Transverse colon (tissue), 4 donors: ENCODE measurements at regions of chr21 and their contacts with region 1.

Region 1: GRCh38 chr21:39715804-39716397 is 29.1 kb upstream of the IGSF5 start:
- DNase-seq: peak; percentile 68
- H3K4me3 ChIP-seq: no peak overlapping the region
- H3K27ac ChIP-seq: no peak overlapping the region
- H3K4me1 ChIP-seq: peaks cover 0 to 9% (median 0%) of the 10 kb centered on the region in 4 donors
- H3K27me3 ChIP-seq: no peaks in the 10 kb centered on the region
- CTCF ChIP-seq: peak; percentile 70 to 77 (median 72)
- EP300 ChIP-seq: no peak
- POLR2A ChIP-seq: no peak

Region 2: GRCh38 chr21:39518138-39518846 is 197.6 kb before region 1 on chr21:
- in situ Hi-C with region 1: loop called (anchors 5 to 10 kb)
- intact Hi-C with region 1: loop called (anchors 1 kb)
- DNase-seq: peak; percentile 31
- H3K4me3 ChIP-seq: no peak overlapping the region
- H3K27ac ChIP-seq: no peak overlapping the region
- H3K4me1 ChIP-seq: peaks cover 0 to 8% (median 2%) of the 10 kb centered on the region in 4 donors
- H3K27me3 ChIP-seq: no peaks in the 10 kb centered on the region
- CTCF ChIP-seq: peak; percentile 83 to 94 (median 89)
- EP300 ChIP-seq: no peak
- POLR2A ChIP-seq: no peak

Region 3: DNA sequence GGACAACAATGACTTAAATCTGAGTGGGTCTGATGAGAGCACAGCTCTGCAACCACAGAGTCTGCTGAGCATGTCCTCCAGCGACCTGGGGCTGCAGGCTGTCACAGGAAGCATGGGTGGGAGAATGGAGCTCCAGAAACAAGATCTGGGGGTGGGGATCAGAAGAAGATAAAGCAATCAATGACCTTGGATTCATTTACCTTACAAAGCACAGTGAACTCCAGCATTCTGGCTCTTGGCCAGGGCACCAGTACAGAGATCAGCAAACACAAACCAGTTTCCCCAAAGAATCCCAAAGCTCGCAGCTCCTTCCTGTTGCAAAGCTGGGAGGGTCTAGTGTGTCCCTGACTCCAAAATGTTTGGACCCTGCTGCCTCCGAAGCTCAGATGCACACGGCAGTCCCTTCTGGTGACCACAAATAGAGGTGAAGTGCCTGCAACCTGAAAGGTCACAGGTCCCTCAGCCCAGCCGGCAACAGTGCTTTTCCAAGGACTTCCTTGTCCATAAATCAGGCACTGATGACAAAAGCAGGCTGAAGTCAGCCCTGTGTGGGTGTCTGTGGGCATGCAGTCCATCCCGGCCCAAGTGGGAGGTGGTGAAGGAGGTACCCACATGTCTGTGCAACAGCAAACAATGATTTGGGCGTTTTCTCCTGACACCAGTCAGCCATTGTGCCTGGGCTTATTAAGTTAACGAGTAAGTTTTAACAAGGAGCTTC is 188.1 kb before region 1 on chr21:
- in situ Hi-C with region 1: loop called in 1 of 4 experiments (anchors 10 kb)
- intact Hi-C with region 1: no loop called
- DNase-seq: peak; percentile 68
- H3K4me3 ChIP-seq: no peak overlapping the region
- H3K27ac ChIP-seq: peak overlapping the region; percentile 56 to 74 (median 66)
- H3K4me1 ChIP-seq: peaks cover 6 to 21% (median 15%) of the 10 kb centered on the region in 4 donors
- H3K27me3 ChIP-seq: no peaks in the 10 kb centered on the region
- CTCF ChIP-seq: no peak
- EP300 ChIP-seq: no peak
- POLR2A ChIP-seq: no peak